Panc1 (cell line): ENCODE measurements at regions of chr20 and their contacts with region 1.

Region 1: GRCh38 chr20:49982346-49983122 is at the start of gene SNAI1:
- DNase-seq: no peak
- ATAC-seq: peak; percentile 83
- H3K4me3 ChIP-seq: peak within 1 kb of the TSS; percentile 83 to 88
- H3K27ac ChIP-seq: peak within 1 kb of the TSS; percentile 88
- H3K4me1 ChIP-seq: peaks cover 43% of the 10 kb centered on the region
- H3K27me3 ChIP-seq: no peaks in the 10 kb centered on the region
- CTCF ChIP-seq: peak; percentile 88; the same call in 1 of the 2 replicates
- total RNA-seq, gene SNAI1: 8.8 TPM

Region 2: GRCh38 chr20:49098136-49098535 is 884.4 kb before region 1 on chr20:
- CTCF ChIA-PET with region 1: interaction called, 12 read pairs
- POLR2A ChIA-PET with region 1: no interaction called
- in situ Hi-C with region 1: no loop called
- intact Hi-C with region 1: no loop called
- DNase-seq: no peak
- ATAC-seq: no peak
- H3K4me3 ChIP-seq: no peak overlapping the region
- H3K27ac ChIP-seq: no peak overlapping the region
- H3K4me1 ChIP-seq: no peaks in the 10 kb centered on the region
- H3K27me3 ChIP-seq: no peaks in the 10 kb centered on the region
- CTCF ChIP-seq: no peak

Region 3: DNA sequence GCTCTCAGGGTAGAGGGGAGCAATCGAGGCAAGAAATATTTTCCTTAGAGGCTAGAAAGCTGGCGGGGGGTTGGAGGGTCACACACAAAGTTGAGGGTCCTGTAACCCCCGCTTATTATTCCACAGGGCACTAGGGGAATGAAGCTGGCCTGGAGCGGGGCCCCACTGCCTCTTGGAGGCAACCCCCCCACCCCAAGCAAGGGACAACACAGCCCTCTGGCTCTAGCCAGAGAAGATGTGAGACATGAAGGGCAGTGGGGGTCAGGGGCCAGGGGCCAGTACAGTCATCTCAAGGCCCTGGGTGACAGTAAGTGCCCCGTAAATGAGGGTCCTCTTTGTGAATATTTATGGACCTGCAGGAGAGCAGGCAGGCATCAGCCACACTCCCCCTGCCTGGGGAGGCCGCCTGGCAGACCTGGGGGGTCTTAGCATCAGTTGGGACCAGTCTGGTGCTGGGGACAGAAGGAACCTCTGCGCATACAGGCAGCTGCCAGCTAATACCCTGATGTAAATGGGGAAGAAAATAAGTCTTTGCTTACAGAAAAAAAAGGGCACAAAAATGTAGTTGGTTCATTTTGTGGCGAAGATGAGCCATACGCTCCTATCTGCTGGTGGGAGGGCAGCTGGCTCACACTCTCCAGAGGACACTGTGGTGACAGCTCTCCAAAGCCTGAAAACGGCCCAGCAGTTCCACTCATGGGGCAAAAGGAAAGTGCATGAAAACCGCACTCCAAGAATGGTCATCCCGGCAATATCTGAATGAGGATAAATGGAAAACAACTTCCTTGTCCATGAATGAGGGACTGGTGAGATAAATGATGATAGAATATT is 89.1 kb before region 1 on chr20:
- CTCF ChIA-PET with region 1: no interaction called
- POLR2A ChIA-PET with region 1: no interaction called
- in situ Hi-C with region 1: no loop called
- intact Hi-C with region 1: no loop called
- DNase-seq: no peak
- ATAC-seq: no peak
- H3K4me3 ChIP-seq: no peak overlapping the region
- H3K27ac ChIP-seq: peak overlapping the region; percentile 24; the same call in 1 of the 2 replicates
- H3K4me1 ChIP-seq: peaks cover 30% of the 10 kb centered on the region
- H3K27me3 ChIP-seq: no peaks in the 10 kb centered on the region
- CTCF ChIP-seq: no peak

Region 4: GRCh38 chr20:50012282-50013263 is 30.0 kb after region 1 on chr20:
- CTCF ChIA-PET with region 1: interaction called, 10 read pairs
- POLR2A ChIA-PET with region 1: interaction called, 10 read pairs
- in situ Hi-C with region 1: no loop called
- intact Hi-C with region 1: no loop called
- DNase-seq: no peak
- ATAC-seq: no peak; the same call in 1 of the 2 replicates
- H3K4me3 ChIP-seq: no peak overlapping the region
- H3K27ac ChIP-seq: no peak overlapping the region
- H3K4me1 ChIP-seq: peaks cover 11% of the 10 kb centered on the region
- H3K27me3 ChIP-seq: no peaks in the 10 kb centered on the region
- CTCF ChIP-seq: no peak

Region 5: DNA sequence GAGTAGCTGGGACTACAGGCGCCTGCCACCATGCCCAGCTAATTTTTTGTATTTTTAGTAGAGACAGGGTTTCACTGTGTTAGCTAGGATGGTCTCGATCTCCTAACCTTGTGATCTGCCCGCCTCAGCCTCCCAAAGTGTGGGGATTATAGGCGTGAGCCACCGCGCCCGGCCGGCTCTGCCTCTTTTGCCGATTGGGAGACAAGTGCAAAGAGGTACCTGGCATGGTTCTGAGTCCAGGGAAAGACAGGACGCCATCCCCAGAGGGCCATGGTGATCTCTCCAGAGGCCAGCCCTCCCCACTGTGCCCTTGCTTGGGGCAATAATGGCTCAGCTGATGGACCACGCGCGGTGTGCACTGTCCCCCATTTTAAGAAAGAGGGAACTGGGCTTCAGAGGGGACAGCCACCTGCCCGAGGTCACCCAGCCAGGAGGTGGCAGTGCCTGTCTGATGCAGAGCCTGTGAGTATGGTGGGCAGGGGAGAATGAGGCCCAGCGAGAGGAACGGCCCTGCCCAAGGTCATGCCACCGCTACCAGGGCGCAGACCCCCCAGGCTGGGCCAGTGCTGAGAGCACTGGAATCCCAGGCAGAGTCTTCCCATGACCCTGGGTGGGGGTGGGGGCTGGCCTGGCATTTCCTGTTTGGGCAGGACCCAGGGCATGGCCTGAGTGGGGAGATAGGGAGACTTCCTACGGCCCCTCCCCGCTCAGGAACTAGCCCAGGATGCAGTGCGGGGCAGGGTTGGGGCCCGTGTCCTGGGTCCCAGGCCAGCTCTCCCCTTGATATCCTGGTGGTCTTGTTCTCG is 61.2 kb after region 1 on chr20:
- CTCF ChIA-PET with region 1: interaction called, 3 read pairs
- POLR2A ChIA-PET with region 1: interaction called, 14 read pairs
- in situ Hi-C with region 1: no loop called
- intact Hi-C with region 1: no loop called
- DNase-seq: no peak
- ATAC-seq: no peak
- H3K4me3 ChIP-seq: no peak overlapping the region
- H3K27ac ChIP-seq: no peak overlapping the region
- H3K4me1 ChIP-seq: peaks cover 4% of the 10 kb centered on the region
- H3K27me3 ChIP-seq: no peaks in the 10 kb centered on the region
- CTCF ChIP-seq: no peak

Region 6: GRCh38 chr20:50070991-50071888 is 88.7 kb after region 1 on chr20:
- CTCF ChIA-PET with region 1: interaction called, 97 read pairs
- POLR2A ChIA-PET with region 1: interaction called, 12 read pairs
- in situ Hi-C with region 1: no loop called
- intact Hi-C with region 1: loop called (anchors 1 kb)
- DNase-seq: peak; percentile 61
- ATAC-seq: peak; percentile 96
- H3K4me3 ChIP-seq: peak overlapping the region; percentile 33 to 47
- H3K27ac ChIP-seq: peak overlapping the region; percentile 66
- H3K4me1 ChIP-seq: 0 out of 2 replicates have a peak, but pooled peaks cover 6% of the 10 kb centered on the region
- H3K27me3 ChIP-seq: no peaks in the 10 kb centered on the region
- CTCF ChIP-seq: peak; percentile 99

Region 7: DNA sequence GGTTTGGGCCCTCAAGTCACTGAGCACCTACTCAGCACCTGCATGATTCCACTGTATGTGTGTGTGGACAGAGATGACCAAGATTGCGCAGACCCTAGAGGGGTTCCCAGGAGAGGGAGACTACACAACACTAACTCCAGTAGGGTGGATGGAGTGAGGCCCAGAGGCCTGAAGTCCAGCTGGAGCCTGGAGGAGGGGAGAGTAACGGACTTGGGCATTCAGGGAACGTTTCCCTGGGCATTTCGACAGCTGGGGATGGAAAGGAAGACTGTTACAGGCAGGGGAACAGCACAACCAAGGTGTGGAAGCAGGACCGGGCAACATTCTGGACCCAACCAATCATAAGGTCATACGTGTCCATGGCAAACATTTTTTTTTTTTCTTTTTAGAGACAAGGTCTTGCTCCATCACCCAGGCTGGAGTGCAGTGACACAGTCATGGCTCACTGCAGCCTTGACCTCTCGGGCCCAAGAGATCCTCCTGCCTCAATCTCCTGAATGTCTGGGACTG is 197.0 kb after region 1 on chr20:
- CTCF ChIA-PET with region 1: no interaction called
- POLR2A ChIA-PET with region 1: no interaction called
- in situ Hi-C with region 1: no loop called
- intact Hi-C with region 1: loop called (anchors 5 kb)
- DNase-seq: no peak
- ATAC-seq: peak; percentile 61
- H3K4me3 ChIP-seq: no peak overlapping the region
- H3K27ac ChIP-seq: no peak overlapping the region; the same call in 1 of the 2 replicates
- H3K4me1 ChIP-seq: no peaks in the 10 kb centered on the region
- H3K27me3 ChIP-seq: no peaks in the 10 kb centered on the region
- CTCF ChIP-seq: peak; percentile 55

Region 8: DNA sequence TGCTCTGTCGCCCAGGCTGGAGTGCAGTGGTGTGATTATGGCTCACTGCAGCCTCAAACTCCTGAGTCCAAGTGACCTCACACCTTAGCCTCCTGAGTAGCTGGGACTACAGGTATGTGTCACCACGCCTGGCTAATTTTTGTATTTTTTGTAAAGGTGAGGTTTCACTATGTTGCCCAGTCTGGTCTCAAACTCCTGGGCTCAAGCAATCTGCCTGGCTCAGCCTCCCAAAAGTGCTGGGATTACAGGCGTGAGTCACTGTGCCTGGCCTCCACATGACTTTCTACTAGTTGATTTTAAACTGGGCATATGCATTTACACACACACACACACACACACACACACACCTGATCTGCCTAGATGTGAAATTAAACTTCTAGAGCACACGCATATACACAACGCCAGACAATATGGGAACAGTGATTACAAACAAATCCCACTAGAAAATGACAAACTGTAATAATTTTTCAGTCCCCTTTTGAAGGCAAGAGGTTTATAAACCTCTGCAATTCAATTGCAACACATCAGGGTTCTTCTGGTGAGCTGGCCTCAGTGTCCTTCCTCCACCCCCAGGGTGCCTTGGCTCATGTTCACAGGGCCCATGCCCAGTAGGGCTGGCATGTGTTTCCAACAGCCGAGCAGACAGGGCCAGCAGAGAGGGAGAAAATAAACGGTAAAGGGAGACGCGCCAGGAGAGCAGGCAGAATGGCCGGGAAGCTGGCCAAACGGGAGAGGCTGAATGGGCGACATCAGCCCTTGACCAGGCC is 780.1 kb after region 1 on chr20:
- CTCF ChIA-PET with region 1: no interaction called
- POLR2A ChIA-PET with region 1: no interaction called
- in situ Hi-C with region 1: no loop called
- intact Hi-C with region 1: no loop called
- DNase-seq: peak; percentile 79
- ATAC-seq: peak; percentile 52
- H3K4me3 ChIP-seq: peak overlapping the region in 1 of 2 experiments; percentile 2; a peak in 1 of 4 replicates
- H3K27ac ChIP-seq: peak overlapping the region; percentile 99
- H3K4me1 ChIP-seq: peaks cover 76% of the 10 kb centered on the region
- H3K27me3 ChIP-seq: no peaks in the 10 kb centered on the region
- CTCF ChIP-seq: no peak